Psoas muscle (tissue), 8 donors: ENCODE measurements at regions of chr2 and their contacts with region 1.

Region 1: DNA sequence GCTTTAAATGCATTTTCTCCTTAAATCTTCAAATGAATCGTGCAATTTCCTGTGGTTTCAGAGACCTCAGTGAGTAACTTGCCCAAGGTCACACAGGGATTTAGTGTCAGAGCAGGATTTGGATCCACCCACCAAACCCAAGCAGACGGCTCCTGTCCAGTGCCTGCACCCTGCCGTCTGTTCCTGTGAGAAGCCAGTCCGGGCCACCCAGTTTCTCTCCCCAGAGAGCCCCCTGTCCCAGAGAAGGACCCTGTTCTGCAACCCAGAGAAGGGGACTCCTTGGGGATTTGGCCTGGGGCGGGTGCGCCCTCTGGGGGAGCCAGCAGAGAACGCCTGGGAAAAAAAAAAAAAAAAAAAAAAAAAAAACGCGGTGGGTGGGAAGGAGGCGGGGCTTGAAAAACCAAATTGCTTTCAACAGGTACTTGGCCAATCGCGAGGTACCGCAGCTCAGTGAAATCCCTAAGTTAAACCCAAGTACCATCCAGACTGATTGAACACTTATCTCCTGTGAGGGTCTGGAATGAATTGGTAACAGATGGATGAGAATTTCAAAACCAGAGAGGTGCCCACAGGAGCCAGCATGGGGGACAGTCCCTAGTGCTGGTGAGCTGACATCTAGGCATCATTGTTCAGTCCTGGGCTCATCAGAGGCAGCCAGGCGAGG is 30.9 kb upstream of the REEP1 start:
- DNase-seq: peak; percentile 21 to 65
- ATAC-seq: peak; percentile 49 to 89 (median 70)
- H3K4me3 ChIP-seq: peak overlapping the region; percentile 20
- H3K27ac ChIP-seq: no peak overlapping the region
- H3K4me1 ChIP-seq: no peaks in the 10 kb centered on the region
- H3K27me3 ChIP-seq: no peaks in the 10 kb centered on the region
- CTCF ChIP-seq: peak; percentile 63

Region 2: GRCh38 chr2:86298411-86299379 is 69.6 kb before region 1 on chr2:
- intact Hi-C with region 1: loop called in 1 of 2 experiments (anchors 1 kb)
- DNase-seq: no peak
- ATAC-seq: peak; percentile 42 to 82 (median 70)
- H3K4me3 ChIP-seq: no peak overlapping the region
- H3K27ac ChIP-seq: peak overlapping the region; percentile 24
- H3K4me1 ChIP-seq: peaks cover 51% of the 10 kb centered on the region
- H3K27me3 ChIP-seq: no peaks in the 10 kb centered on the region
- CTCF ChIP-seq: peak; percentile 34

Region 3: DNA sequence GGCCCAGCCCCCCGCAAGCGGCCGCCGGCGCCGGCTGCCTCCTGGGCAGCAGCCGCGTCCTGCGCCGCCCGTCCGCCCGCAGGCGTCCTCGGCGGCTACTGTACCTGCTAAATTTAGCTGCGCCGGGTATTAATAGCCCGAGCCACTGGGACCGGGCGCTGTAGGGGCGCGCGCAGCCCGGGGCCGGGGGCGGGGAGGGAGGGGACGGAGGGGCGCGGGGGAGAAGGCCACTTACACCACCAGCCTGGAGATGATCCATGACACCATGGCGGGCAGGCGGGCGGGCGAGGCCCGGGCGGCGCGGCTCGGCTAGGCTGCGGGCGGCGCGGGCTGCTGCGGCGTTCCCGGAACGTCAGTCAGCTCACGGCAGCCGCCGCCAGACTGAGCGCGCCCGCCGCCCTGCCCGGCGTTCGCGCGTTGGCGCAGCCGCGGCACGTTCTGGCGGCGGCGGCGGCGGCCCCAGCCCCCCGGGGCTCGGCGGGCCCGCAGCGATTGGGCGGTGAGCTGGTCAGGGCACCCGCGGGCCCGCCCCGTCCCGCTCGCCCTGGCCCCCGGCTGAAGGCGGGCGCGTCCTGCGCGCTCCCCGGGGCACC is 31.0 kb before region 1 on chr2 and contains the start of gene REEP1:
- intact Hi-C with region 1: loop called in 1 of 2 experiments (anchors 5 kb)
- DNase-seq: peak; percentile 48 to 72
- ATAC-seq: peak; percentile 90 to 93 (median 92)
- H3K4me3 ChIP-seq: peak within 1 kb of the TSS; percentile 85
- H3K27ac ChIP-seq: peak within 1 kb of the TSS; percentile 88
- H3K4me1 ChIP-seq: peaks cover 16% of the 10 kb centered on the region
- H3K27me3 ChIP-seq: no peaks in the 10 kb centered on the region
- CTCF ChIP-seq: no peak
- total RNA-seq, gene REEP1: 4.1 to 16.1 (median 9.7) TPM

Region 4: DNA sequence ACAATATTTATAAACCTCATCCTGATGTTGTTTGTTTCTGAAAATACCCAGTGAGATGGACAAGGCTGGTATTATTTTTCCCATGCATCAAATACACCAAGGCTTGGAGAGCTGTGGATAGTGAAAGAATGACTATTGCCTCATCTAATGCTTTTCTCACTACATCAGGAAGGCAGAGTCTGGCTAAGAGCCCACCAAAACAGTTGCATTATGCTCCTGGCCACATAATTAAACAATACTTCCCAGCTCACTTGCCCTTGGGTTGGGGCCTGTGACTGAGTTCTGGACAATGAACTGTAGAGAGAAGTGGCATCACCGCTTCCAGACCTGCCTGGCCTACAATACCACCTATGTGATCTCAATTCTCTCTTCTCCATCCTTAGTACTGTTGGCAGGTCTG is 15.6 kb after region 1 on chr2:
- intact Hi-C with region 1: no loop called
- DNase-seq: no peak
- ATAC-seq: peak; percentile 29 to 73 (median 48)
- H3K4me3 ChIP-seq: no peak overlapping the region
- H3K27ac ChIP-seq: no peak overlapping the region
- H3K4me1 ChIP-seq: peaks cover 7% of the 10 kb centered on the region
- H3K27me3 ChIP-seq: no peaks in the 10 kb centered on the region
- CTCF ChIP-seq: no peak